ENCODE measurements at regions of chr12 and their contacts with region 1.

Region 1: GRCh38 chr12:45543906-45544315 is 185.6 kb upstream of the ARID2 start:
- DNase-seq: no peak
- H3K4me3 ChIP-seq: no peak overlapping the region
- H3K27ac ChIP-seq: no peak overlapping the region
- H3K4me1 ChIP-seq: no peaks in the 10 kb centered on the region
- H3K27me3 ChIP-seq: no peaks in the 10 kb centered on the region
- CTCF ChIP-seq: peak; percentile 65 to 78 (median 65)
- EP300 ChIP-seq: no peak
- POLR2A ChIP-seq: no peak

Region 2: DNA sequence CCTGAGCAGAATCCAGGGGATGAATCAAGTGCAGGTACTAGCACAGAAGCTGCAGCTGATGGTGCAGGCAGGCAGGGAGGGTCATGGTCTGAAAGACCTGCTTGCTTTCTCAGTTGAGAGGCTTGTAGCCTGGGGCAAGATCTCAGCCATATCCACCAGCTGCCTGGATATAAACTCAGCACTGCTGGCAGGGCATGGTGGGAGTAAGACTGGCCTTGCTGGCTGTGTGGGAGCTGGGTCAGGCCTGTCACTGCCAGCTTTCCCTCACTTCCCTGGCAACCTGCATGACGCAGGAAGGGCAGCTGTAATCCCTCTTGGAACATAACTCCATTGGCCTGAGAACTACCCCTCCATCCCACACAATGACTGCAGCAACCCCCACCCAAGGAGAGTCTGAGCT is 97.9 kb before region 1 on chr12:
- intact Hi-C with region 1: no loop called
- DNase-seq: peak; percentile 39
- H3K4me3 ChIP-seq: no peak overlapping the region
- H3K27ac ChIP-seq: no peak overlapping the region
- H3K4me1 ChIP-seq: no peaks in the 10 kb centered on the region
- H3K27me3 ChIP-seq: no peaks in the 10 kb centered on the region
- CTCF ChIP-seq: no peak
- EP300 ChIP-seq: no peak
- POLR2A ChIP-seq: no peak

Region 3: DNA sequence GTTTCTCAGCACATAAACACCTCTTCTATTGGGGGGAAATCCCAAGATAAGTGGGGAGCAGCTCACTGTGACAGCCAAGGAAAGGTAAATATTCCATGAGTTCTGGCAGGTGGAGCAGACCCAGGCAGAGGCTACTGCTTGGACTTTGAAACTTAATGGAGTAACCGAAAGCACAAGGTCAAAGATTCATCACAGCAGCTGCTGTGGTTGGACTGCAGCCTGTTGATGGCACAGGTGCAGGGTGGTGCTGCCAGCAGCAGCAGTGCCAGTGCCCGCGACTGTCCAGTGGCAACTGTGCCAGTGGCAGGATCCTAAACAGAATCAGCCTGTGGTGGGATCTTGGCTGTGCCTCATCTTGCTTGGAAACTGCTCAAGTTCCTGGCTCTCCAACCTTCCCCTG is 104.2 kb after region 1 on chr12:
- intact Hi-C with region 1: no loop called
- DNase-seq: no peak
- H3K4me3 ChIP-seq: no peak overlapping the region
- H3K27ac ChIP-seq: no peak overlapping the region
- H3K4me1 ChIP-seq: no peaks in the 10 kb centered on the region
- H3K27me3 ChIP-seq: no peaks in the 10 kb centered on the region
- CTCF ChIP-seq: no peak
- EP300 ChIP-seq: no peak
- POLR2A ChIP-seq: no peak

Region 4: GRCh38 chr12:45720069-45720468 is 176.2 kb after region 1 on chr12:
- intact Hi-C with region 1: loop called (anchors 5 kb)
- DNase-seq: no peak
- H3K4me3 ChIP-seq: no peak overlapping the region
- H3K27ac ChIP-seq: no peak overlapping the region
- H3K4me1 ChIP-seq: peaks cover 12 to 64% (median 58%) of the 10 kb centered on the region in 4 donors
- H3K27me3 ChIP-seq: no peaks in the 10 kb centered on the region
- CTCF ChIP-seq: no peak
- EP300 ChIP-seq: no peak
- POLR2A ChIP-seq: no peak

Region 5: GRCh38 chr12:45745861-45746277 is 202.0 kb after region 1 on chr12:
- intact Hi-C with region 1: loop called (anchors 5 kb)
- DNase-seq: no peak
- H3K4me3 ChIP-seq: no peak overlapping the region
- H3K27ac ChIP-seq: no peak overlapping the region
- H3K4me1 ChIP-seq: peaks cover 7 to 50% (median 21%) of the 10 kb centered on the region in 4 donors
- H3K27me3 ChIP-seq: no peaks in the 10 kb centered on the region
- CTCF ChIP-seq: peak; percentile 16 to 48 (median 37)
- EP300 ChIP-seq: no peak
- POLR2A ChIP-seq: no peak